ENCODE measurements at regions of chr1 and their contacts with region 1.

Region 1: DNA sequence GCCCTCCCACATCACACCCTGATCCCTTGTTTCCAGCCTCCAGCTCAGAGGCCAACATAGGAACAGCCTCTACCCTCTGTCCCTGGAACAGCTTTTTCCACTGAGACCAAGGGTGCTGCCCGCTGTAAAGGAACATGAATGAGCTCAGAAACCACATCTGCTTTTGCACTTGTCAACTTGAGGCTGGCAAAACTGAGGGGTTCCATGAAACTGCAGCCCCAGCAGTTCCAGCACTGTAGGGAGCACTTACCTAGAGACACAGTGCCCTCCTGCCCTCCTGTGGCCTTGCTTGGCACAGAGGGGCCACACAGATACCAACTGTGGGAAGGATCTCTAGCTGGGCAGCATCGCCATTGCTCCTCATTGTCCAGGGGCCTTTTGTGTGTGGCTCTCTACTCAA is 51.7 kb downstream of the ITPKB start:
- DNase-seq: peak; percentile 78
- H3K4me3 Mint-ChIP-seq: no peak overlapping the region
- H3K27ac Mint-ChIP-seq: peak overlapping the region; percentile 85
- H3K4me1 Mint-ChIP-seq: peaks cover 99% of the 10 kb centered on the region
- H3K27me3 Mint-ChIP-seq: no peaks in the 10 kb centered on the region

Region 2: GRCh38 chr1:226626577-226626956 is 60.9 kb before region 1 on chr1:
- CTCF ChIA-PET with region 1: interaction called, 120 read pairs
- POLR2A ChIA-PET with region 1: interaction called, 4 read pairs
- intact Hi-C with region 1: loop called (anchors 2 kb)
- DNase-seq: peak; percentile 92
- H3K4me3 Mint-ChIP-seq: peak overlapping the region; percentile 38
- H3K27ac Mint-ChIP-seq: peak overlapping the region; percentile 76
- H3K4me1 Mint-ChIP-seq: peaks cover 25% of the 10 kb centered on the region
- H3K27me3 Mint-ChIP-seq: peaks cover 1% of the 10 kb centered on the region

Region 3: GRCh38 chr1:226642876-226643576 is 44.4 kb before region 1 on chr1:
- CTCF ChIA-PET with region 1: interaction called, 23 read pairs
- POLR2A ChIA-PET with region 1: no interaction called
- intact Hi-C with region 1: no loop called
- DNase-seq: peak; percentile 86
- H3K4me3 Mint-ChIP-seq: peak overlapping the region; percentile 14
- H3K27ac Mint-ChIP-seq: peak overlapping the region; percentile 76
- H3K4me1 Mint-ChIP-seq: peaks cover 56% of the 10 kb centered on the region
- H3K27me3 Mint-ChIP-seq: no peaks in the 10 kb centered on the region

Region 4: DNA sequence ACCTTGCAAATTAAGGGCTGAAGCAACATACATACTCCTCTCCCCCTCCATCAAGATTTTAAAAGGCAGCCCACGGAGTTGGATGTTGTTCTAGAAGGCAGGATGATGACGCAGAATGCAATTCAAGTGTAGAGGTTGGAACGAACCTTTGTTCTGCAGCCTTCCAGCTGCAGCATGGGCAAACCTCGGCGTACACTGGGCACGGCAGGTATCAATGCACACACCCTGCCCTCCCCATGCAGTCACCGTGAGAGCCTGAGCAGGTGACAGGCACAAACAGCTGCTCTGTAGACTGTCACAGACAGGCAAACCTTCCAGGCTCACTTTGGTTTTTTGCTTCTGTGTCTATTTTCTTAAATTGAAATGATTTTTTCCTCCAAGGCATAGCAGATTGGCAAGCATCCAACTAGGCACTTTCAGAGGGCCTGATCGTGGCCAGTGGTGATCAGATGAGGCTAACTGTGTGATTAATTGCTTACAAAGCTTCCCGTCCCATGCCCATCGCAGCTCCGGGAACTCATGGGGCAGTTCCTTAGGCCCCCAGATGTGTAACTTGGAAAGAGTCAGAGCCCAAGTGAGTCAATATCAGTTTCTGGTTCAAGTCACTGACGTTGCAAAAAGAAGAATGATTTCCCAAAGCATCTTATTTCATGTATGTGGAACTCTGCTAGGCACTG is 30.7 kb before region 1 on chr1:
- CTCF ChIA-PET with region 1: interaction called, 43 read pairs
- POLR2A ChIA-PET with region 1: interaction called, 15 read pairs
- intact Hi-C with region 1: loop called (anchors 2 kb)
- DNase-seq: no peak
- H3K4me3 Mint-ChIP-seq: peak overlapping the region; percentile 43
- H3K27ac Mint-ChIP-seq: no peak overlapping the region
- H3K4me1 Mint-ChIP-seq: peaks cover 29% of the 10 kb centered on the region
- H3K27me3 Mint-ChIP-seq: no peaks in the 10 kb centered on the region

Region 5: DNA sequence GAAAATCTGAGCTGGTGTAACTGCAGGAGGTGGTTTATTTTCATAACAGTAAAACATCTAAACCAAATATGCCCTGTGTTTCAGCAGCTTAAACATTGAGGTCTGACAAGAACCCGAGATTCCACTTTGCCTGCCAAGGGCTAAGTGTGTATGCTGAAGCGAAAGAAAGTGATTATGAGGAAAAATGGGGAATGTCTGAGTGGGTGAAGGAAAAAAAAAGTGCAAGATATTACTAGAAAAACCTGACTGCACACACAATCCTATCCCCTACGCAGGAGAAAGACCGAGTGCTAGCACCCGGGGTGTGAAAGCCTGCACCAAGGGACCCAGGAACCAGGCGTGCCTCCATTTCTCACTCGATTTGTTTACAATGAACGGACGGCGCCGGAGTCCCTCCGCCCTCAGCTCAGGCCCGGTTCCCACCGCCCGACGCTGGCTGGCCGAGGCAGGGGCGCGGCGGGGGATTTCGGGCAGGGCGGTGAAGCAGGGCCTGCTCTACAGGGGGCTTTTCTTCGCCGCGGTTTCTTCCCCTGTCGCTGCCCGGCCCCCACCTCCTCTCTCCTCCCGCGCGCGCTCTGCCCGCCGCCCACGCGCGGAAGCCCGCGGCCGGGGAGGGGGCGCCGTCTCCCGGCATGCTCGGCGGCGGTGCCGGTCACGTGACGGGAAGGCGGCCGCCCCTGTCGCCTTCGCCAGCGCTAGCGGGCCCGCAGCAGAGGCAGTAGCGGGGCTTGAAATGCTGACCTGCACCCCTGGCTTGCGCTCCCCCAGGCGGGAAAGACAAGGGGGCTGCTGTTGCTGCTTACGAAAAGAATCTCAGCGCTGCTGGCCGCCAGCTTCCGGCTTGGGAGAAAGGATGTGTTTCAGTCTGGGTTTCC is 15.8 kb after region 1 on chr1:
- CTCF ChIA-PET with region 1: interaction called, 16 read pairs
- POLR2A ChIA-PET with region 1: interaction called, 18 read pairs
- intact Hi-C with region 1: loop called (anchors 1 kb)
- DNase-seq: peak; percentile 87
- H3K4me3 Mint-ChIP-seq: peak overlapping the region; percentile 74
- H3K27ac Mint-ChIP-seq: peak overlapping the region; percentile 89
- H3K4me1 Mint-ChIP-seq: peaks cover 78% of the 10 kb centered on the region
- H3K27me3 Mint-ChIP-seq: no peaks in the 10 kb centered on the region

Region 6: DNA sequence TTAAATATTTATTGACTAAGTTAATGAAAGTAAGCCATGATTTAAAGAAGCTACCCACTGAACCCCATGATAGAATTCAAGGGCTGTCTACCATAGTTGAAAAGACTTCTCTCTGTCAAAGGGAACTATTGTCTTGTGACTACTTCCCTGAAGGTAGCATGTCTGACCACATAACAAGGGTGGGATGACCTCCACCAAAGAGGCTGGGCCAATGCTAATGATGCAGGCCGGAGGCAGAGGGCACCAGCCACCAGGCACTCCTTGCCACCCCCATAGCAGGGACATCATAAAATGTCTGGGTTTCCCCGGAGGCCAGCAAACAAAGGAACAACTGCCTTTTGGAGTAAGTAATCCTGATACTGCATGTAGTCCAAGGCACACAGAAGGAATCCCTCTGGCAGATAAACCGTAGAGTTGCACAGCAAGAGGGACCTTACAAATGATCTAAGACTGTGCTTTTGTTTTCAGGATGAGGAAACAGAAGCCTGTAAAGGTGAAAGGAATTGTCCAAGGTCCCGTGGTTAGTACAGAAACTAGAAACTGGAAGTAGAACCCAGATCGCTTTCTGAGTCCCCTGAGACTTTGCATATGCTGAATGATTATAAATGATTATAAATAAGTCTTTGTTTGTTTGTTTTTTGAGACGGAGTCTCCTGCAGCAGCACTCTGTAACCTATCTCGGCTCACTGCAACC is 85.2 kb after region 1 on chr1:
- CTCF ChIA-PET with region 1: no interaction called
- POLR2A ChIA-PET with region 1: no interaction called
- intact Hi-C with region 1: no loop called
- DNase-seq: no peak
- H3K4me3 Mint-ChIP-seq: no peak overlapping the region
- H3K27ac Mint-ChIP-seq: no peak overlapping the region
- H3K4me1 Mint-ChIP-seq: peaks cover 2% of the 10 kb centered on the region
- H3K27me3 Mint-ChIP-seq: no peaks in the 10 kb centered on the region

Region 7: GRCh38 chr1:226814751-226815496 is 127.5 kb after region 1 on chr1:
- CTCF ChIA-PET with region 1: no interaction called
- POLR2A ChIA-PET with region 1: no interaction called
- intact Hi-C with region 1: no loop called
- DNase-seq: no peak
- H3K4me3 Mint-ChIP-seq: no peak overlapping the region
- H3K27ac Mint-ChIP-seq: no peak overlapping the region
- H3K4me1 Mint-ChIP-seq: peaks cover 9% of the 10 kb centered on the region
- H3K27me3 Mint-ChIP-seq: no peaks in the 10 kb centered on the region

Region 8: DNA sequence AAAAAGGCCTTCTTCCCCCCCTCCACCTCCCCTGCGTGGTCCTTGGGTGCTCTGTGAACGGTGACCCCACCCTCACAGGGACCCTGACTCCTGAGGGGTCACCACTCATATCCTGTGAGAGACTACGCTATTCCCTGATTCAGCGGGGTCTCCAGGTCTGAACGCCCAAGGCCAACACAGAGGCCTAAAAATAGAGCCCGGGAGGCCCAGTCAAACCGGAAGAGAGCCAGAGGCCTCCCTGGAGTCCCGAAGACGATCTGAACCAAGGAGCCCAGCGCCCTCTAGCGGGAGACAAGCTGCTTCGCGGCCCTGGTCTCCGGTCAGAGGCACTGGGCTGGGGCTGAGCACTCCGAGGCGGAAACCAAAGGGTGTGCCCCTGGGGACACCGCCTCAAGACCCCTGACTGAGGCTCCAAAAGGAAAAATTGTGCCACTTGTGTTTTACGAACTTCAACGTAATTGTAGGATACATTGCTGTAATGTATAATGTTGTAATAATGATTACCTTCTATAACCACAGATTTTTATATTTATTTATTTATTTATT is 140.6 kb after region 1 on chr1:
- CTCF ChIA-PET with region 1: interaction called, 23 read pairs
- POLR2A ChIA-PET with region 1: no interaction called
- intact Hi-C with region 1: no loop called
- DNase-seq: peak; percentile 98
- H3K4me3 Mint-ChIP-seq: peak overlapping the region; percentile 52
- H3K27ac Mint-ChIP-seq: peak overlapping the region; percentile 88
- H3K4me1 Mint-ChIP-seq: peaks cover 28% of the 10 kb centered on the region
- H3K27me3 Mint-ChIP-seq: no peaks in the 10 kb centered on the region